Motor neuron (in vitro differentiated cells): ENCODE measurements at regions of chr16 and their contacts with region 1.

Region 1: DNA sequence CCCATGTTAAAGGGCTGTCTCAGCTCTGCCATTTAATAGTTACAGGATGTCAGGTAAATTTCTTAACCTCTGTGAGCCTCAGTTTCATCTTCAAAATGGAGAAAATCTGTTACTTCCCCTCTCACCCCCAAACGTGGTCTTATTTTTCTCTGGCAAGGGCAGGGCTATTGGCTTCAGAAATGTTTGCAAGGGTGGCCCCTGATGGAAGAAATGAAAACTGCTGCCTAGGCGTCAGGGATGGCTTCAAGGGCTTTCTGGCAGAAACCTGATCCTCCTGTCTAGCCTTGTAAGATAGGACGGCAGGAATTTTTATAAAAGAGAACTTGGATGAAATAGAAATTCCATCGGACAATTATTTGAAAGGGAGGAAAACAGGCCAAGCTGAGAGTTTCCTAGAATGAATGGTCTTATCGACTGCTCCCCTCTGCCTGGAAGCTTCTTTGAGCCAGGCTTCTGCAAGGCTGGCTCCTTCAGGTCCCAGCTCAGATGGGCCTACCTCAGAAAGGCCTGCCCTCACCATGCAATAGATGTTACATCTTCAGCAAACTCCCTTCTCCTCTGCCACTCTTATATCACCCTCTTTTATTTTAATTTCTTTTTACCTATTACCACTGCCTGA is 43.0 kb upstream of the TANGO6 start:
- ATAC-seq: peak; percentile 33 to 99 (median 86)
- H3K4me3 ChIP-seq: no peak overlapping the region
- H3K27ac ChIP-seq: no peak overlapping the region
- H3K4me1 ChIP-seq: peaks cover 0 to 3% of the 10 kb centered on the region in 2 donors

Region 2: GRCh38 chr16:68214726-68215125 is 585.6 kb before region 1 on chr16:
- in situ Hi-C with region 1: no loop called
- ATAC-seq: no peak
- H3K4me3 ChIP-seq: no peak overlapping the region
- H3K27ac ChIP-seq: no peak overlapping the region
- H3K4me1 ChIP-seq: no peaks in the 10 kb centered on the region

Region 3: DNA sequence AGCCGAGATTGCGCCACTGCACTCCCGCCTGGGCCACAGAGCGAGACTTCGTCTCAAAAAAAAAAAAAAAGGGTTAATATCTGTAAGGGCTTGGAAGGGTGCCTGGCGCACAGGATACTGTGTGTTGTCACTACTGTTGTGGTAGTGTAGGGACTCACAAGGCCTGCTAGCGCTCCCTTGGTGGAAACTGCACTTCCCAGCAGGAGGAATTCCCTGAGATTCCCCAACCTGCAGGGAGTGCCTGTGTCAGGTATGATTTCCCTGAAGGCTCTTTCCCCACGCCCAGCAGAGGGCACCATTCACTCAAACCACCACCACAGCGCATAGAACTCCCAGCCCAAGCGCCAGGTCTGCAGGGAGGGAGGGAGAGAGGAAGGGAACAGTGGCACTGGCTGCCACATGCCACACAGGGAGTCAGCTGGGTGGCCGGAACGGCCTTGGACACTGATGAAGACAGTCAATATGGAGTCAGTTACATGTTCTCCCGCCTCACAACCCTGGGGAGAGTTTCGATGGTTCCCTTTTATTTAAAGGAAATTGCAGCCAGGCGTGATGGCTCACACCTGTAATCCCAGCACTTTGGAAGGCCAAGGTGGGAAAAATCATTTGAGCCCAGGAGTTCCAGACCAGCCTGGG is 96.0 kb before region 1 on chr16:
- in situ Hi-C with region 1: loop called in 1 of 9 experiments (anchors 10 kb)
- ATAC-seq: peak; percentile 52 to 89 (median 68)
- H3K4me3 ChIP-seq: no peak overlapping the region
- H3K27ac ChIP-seq: no peak overlapping the region
- H3K4me1 ChIP-seq: no peaks in the 10 kb centered on the region